ENCODE measurements at regions of chr3 and their contacts with region 1.

Region 1: DNA sequence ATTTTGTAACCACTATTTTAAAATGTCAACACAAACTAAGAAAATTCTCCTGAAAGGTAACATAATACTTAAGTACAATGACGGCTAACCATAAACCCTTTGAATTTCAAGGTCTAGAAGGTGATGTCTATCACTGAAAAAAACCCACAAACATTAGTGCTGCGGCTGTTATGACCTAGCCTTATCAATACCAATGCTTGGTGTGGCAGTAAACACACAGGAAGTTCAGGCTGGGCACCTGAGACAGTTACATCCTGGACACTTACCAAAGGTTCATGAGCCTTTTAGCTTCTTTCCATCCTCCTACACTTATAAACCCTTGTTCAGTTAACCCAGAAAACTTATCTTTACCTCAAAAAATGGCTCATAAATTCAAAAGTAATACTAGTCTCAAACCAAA is 5.8 kb downstream of the HSPBAP1 start:
- DNase-seq: no peak
- ATAC-seq: no peak
- H3K4me3 ChIP-seq: no peak overlapping the region
- H3K27ac ChIP-seq: no peak overlapping the region
- H3K4me1 ChIP-seq: peaks cover 2% of the 10 kb centered on the region; the same call in 1 of the 2 replicates
- H3K27me3 ChIP-seq: no peaks in the 10 kb centered on the region
- CTCF ChIP-seq: no peak

Region 2: DNA sequence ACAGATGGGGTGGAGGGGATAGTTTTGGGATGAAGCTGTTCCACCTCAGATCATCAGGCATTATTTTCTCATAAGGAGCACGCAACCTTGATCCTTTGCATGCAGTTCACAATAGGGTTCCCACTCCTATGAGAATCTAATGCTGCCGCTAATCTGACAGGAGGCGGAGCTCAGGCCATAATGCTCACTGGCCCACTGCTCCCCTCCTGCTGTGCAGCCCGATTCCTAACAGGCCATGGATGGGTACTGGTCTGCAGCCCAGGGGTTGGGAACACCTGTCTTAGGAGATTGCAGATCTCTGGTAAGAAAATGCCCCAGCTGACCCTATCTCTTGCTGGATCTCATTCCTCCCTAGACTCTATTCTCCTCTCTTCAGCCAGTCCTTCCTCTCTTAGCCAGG is 456.0 kb before region 1 on chr3:
- CTCF ChIA-PET with region 1: no interaction called
- POLR2A ChIA-PET with region 1: no interaction called
- in situ Hi-C with region 1: no loop called
- intact Hi-C with region 1: no loop called
- DNase-seq: no peak
- ATAC-seq: no peak
- H3K4me3 ChIP-seq: no peak overlapping the region
- H3K27ac ChIP-seq: no peak overlapping the region
- H3K4me1 ChIP-seq: no peaks in the 10 kb centered on the region
- H3K27me3 ChIP-seq: peaks cover 3% of the 10 kb centered on the region; the same call in 1 of the 2 replicates
- CTCF ChIP-seq: no peak

Region 3: GRCh38 chr3:123036352-123037014 is 248.6 kb after region 1 on chr3:
- CTCF ChIA-PET with region 1: no interaction called
- POLR2A ChIA-PET with region 1: interaction called, 12 read pairs
- in situ Hi-C with region 1: no loop called
- intact Hi-C with region 1: no loop called
- DNase-seq: no peak
- ATAC-seq: no peak
- H3K4me3 ChIP-seq: no peak overlapping the region
- H3K27ac ChIP-seq: no peak overlapping the region
- H3K4me1 ChIP-seq: no peaks in the 10 kb centered on the region
- H3K27me3 ChIP-seq: peaks cover 17% of the 10 kb centered on the region; the same call in 1 of the 2 replicates
- CTCF ChIP-seq: peak; percentile 28

Measured in Panc1 (cell line).